PC-3 (cell line): ENCODE measurements at regions of chr22 and their contacts with region 1.

Region 1: GRCh38 chr22:42844756-42845155 is 12.3 kb downstream of the ARFGAP3 start:
- DNase-seq: peak; percentile 93
- ATAC-seq: peak; percentile 97
- H3K4me3 ChIP-seq: peak overlapping the region; percentile 26; the same call in 1 of the 2 replicates
- H3K27ac ChIP-seq: peak overlapping the region; percentile 81
- H3K4me1 ChIP-seq: peaks cover 29% of the 10 kb centered on the region
- H3K27me3 ChIP-seq: no peaks in the 10 kb centered on the region
- CTCF ChIP-seq: no peak

Region 2: GRCh38 chr22:41688365-41689211 is 1156.2 kb before region 1 on chr22 and contains the start of gene SNU13:
- CTCF ChIA-PET with region 1: no interaction called
- POLR2A ChIA-PET with region 1: interaction called, 13 read pairs
- intact Hi-C with region 1: no loop called
- DNase-seq: peak; percentile 86
- ATAC-seq: peak; percentile 93
- H3K4me3 ChIP-seq: peak within 1 kb of the TSS; percentile 94
- H3K27ac ChIP-seq: peak within 1 kb of the TSS; percentile 76
- H3K4me1 ChIP-seq: peaks cover 13% of the 10 kb centered on the region; the same call in 1 of the 2 replicates
- H3K27me3 ChIP-seq: no peaks in the 10 kb centered on the region
- CTCF ChIP-seq: no peak
- total RNA-seq, gene SNU13: 159 and 173 TPM in 2 replicates